ENCODE measurements at regions of chr14 and their contacts with region 1.

Region 1: GRCh38 chr14:56975521-56975920 is 165.2 kb upstream of the OTX2 start:
- DNase-seq: no peak
- H3K4me3 ChIP-seq: no peak overlapping the region
- H3K27ac ChIP-seq: no peak overlapping the region
- H3K4me1 ChIP-seq: no peaks in the 10 kb centered on the region
- H3K27me3 ChIP-seq: no peaks in the 10 kb centered on the region
- CTCF ChIP-seq: no peak
- POLR2A ChIP-seq: no peak

Region 2: GRCh38 chr14:56896922-56897321 is 78.6 kb before region 1 on chr14:
- CTCF ChIA-PET with region 1: no interaction called
- POLR2A ChIA-PET with region 1: interaction called, 11 read pairs
- dilution Hi-C with region 1: no loop called
- intact Hi-C with region 1: no loop called
- DNase-seq: no peak
- H3K4me3 ChIP-seq: no peak overlapping the region
- H3K27ac ChIP-seq: no peak overlapping the region
- H3K4me1 ChIP-seq: no peaks in the 10 kb centered on the region
- H3K27me3 ChIP-seq: no peaks in the 10 kb centered on the region
- CTCF ChIP-seq: no peak
- POLR2A ChIP-seq: no peak

Measured in endothelial cell of umbilical vein (primary cell).